ENCODE measurements at regions of chr5 and their contacts with region 1.

Region 1: DNA sequence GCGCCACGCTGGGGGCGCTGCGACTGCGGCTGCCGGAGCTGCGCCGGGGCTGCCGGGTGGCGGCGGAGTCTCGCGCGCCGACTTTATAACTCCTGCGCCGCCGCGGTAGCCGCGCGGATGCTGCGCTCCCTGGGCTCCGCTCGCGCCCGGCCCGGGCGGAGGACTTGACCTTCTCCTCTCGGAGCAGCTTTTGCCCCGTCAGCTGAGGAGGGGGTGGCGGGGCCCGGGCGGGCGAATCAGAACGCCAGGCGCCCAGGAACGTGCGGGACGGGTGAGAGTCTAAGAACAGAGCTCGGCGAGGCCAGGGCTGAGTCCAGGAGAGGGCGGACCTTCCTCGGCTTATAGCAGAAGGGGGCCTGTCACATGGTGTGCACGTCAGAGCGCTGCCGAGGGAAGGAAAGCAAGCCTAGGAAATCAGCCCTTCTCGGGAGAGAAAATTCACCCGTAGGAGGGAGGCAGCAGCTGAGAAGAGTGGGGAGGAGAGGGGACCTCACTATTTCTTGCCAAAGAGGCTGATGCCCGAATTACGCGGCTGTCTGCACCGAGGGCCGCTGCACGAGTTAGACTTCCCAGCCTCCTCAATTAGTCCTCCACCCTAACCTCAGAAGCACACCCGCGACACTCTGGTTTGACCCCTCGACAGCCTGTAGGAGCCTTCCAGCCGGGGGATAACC is at the start of gene FOXD1:
- DNase-seq: peak; percentile 93
- H3K4me3 ChIP-seq: peak within 1 kb of the TSS; percentile 85
- H3K27ac ChIP-seq: peak within 1 kb of the TSS; percentile 90
- H3K27me3 ChIP-seq: no peaks in the 10 kb centered on the region
- CTCF ChIP-seq: peak; percentile 8; the same call in 1 of the 2 replicates
- polyA plus RNA-seq, gene FOXD1: 7.5 and 8.4 TPM in 2 replicates

Region 2: DNA sequence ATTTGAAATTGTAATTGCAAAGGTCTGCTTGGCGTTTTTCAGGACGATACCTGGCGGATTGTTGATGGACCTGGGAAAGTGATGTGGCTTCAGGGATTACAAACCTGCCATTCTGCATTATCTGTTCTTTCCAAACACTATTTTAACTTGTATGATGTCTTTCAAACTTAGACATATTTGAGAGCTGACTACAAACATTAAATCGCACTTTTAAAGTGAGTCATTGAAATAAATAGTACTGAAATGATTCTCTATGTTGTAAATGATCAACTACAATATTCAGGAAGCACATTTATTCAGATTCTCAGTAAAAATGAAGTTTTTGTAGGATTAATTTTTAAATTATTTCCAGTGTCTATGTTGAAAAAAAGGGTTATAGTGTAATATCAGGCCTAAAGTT is 360.6 kb before region 1 on chr5:
- CTCF ChIA-PET with region 1: interaction called, 19 read pairs
- POLR2A ChIA-PET with region 1: no interaction called
- DNase-seq: no peak
- H3K4me3 ChIP-seq: no peak overlapping the region
- H3K27ac ChIP-seq: no peak overlapping the region
- H3K27me3 ChIP-seq: no peaks in the 10 kb centered on the region
- CTCF ChIP-seq: no peak

Region 3: GRCh38 chr5:73266925-73267765 is 181.5 kb before region 1 on chr5:
- CTCF ChIA-PET with region 1: interaction called, 7 read pairs
- POLR2A ChIA-PET with region 1: interaction called, 12 read pairs
- DNase-seq: no peak
- H3K4me3 ChIP-seq: peak overlapping the region; percentile 29
- H3K27ac ChIP-seq: no peak overlapping the region
- H3K27me3 ChIP-seq: no peaks in the 10 kb centered on the region
- CTCF ChIP-seq: no peak

Region 4: GRCh38 chr5:73365301-73365853 is 83.2 kb before region 1 on chr5:
- CTCF ChIA-PET with region 1: no interaction called
- POLR2A ChIA-PET with region 1: interaction called, 17 read pairs
- DNase-seq: peak; percentile 83
- H3K4me3 ChIP-seq: no peak overlapping the region
- H3K27ac ChIP-seq: peak overlapping the region; percentile 53
- H3K27me3 ChIP-seq: no peaks in the 10 kb centered on the region
- CTCF ChIP-seq: no peak

Region 5: GRCh38 chr5:73498057-73499008 is 49.7 kb after region 1 on chr5 and contains the start of gene BTF3:
- CTCF ChIA-PET with region 1: interaction called, 10 read pairs
- POLR2A ChIA-PET with region 1: interaction called, 8 read pairs
- DNase-seq: peak; percentile 92
- H3K4me3 ChIP-seq: peak within 1 kb of the TSS; percentile 86
- H3K27ac ChIP-seq: peak within 1 kb of the TSS; percentile 88
- H3K27me3 ChIP-seq: no peaks in the 10 kb centered on the region
- CTCF ChIP-seq: no peak
- polyA plus RNA-seq, gene BTF3: 707 and 755 TPM in 2 replicates

Region 6: GRCh38 chr5:73748510-73749400 is 300.2 kb after region 1 on chr5:
- CTCF ChIA-PET with region 1: no interaction called
- POLR2A ChIA-PET with region 1: no interaction called
- DNase-seq: no peak
- H3K4me3 ChIP-seq: 0 out of 2 replicates have a peak overlapping the region, but pooled peaks have one; percentile 2
- H3K27ac ChIP-seq: peak overlapping the region; percentile 25
- H3K27me3 ChIP-seq: no peaks in the 10 kb centered on the region
- CTCF ChIP-seq: no peak